ENCODE measurements at regions of chr9 and their contacts with region 1.

Region 1: GRCh38 chr9:129139993-129140396 is 28.8 kb downstream of the PTPA start:
- DNase-seq: peak; percentile 91 to 96
- H3K4me3 ChIP-seq: peak overlapping the region; percentile 36 to 59 (median 53)
- H3K27ac ChIP-seq: peak overlapping the region; percentile 98 to 100
- H3K4me1 ChIP-seq: peaks cover 33 to 44% of the 10 kb centered on the region in 2 donors
- H3K27me3 ChIP-seq: no peaks in the 10 kb centered on the region
- CTCF ChIP-seq: peak in 1 of 3 donors; percentile 14
- POLR2A ChIP-seq: peak; percentile 55

Region 2: DNA sequence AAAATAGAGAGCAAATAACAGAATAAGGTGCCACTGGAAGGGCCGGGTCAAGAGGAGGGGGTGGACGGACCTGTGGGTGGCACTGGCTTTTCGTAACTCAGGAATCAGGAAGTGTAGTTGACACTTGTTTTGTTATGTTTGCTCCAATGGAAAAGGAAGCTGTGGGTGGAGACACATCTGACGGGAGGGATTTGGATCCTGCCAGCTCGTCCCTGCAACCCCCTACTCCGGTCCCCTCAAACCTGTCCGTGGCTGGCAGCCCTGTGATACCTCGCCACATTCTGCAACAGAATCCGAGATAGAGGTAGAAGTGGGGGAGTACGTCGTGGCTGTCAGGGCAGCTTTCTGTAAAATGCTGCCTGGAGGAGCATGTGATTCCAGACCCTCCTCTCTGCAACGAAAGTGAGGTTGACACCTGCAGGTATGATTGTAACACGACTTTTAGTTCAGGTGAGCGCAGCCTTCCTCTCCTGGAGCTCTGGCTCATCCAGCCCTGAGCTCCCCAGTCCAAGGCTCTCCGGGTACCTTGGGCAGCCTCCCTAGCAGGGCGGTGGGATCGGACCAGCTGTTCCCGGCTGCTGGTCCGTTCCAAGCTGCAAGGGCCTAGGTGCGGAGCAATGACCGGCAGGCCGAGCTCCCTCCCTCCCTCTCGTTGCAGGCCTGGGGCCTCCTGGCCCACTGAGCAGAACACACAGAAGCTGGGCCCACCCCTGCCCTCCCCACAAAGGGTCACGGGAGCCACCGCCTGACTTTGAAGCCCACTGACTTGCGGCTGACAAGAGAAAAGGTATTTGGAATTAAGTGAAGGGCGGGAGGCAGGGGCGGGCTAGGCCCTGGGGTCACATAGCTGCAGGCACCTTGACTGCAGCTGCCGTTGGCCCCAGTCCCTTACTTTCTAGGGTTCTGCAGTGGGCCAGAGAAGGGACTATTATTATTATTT is 142.5 kb after region 1 on chr9:
- intact Hi-C with region 1: no loop called
- DNase-seq: peak; percentile 26 to 40
- H3K4me3 ChIP-seq: peak overlapping the region; percentile 41 to 60 (median 44)
- H3K27ac ChIP-seq: peak overlapping the region; percentile 25 to 57
- H3K4me1 ChIP-seq: no peaks in the 10 kb centered on the region
- H3K27me3 ChIP-seq: no peaks in the 10 kb centered on the region
- CTCF ChIP-seq: no peak
- POLR2A ChIP-seq: no peak

Region 3: GRCh38 chr9:129495534-129496325 is 355.7 kb after region 1 on chr9:
- intact Hi-C with region 1: loop called (anchors 1 kb)
- DNase-seq: peak; percentile 92 to 96
- H3K4me3 ChIP-seq: peak overlapping the region; percentile 59 to 77 (median 67)
- H3K27ac ChIP-seq: peak overlapping the region; percentile 100
- H3K4me1 ChIP-seq: peaks cover 17 to 38% of the 10 kb centered on the region in 2 donors
- H3K27me3 ChIP-seq: no peaks in the 10 kb centered on the region
- CTCF ChIP-seq: peak in 1 of 3 donors; percentile 44
- POLR2A ChIP-seq: peak; percentile 11

Region 4: GRCh38 chr9:129610473-129611301 is 470.7 kb after region 1 on chr9:
- intact Hi-C with region 1: loop called (anchors 2 kb)
- DNase-seq: peak; percentile 67 to 85
- H3K4me3 ChIP-seq: peak overlapping the region; percentile 58 to 73 (median 71)
- H3K27ac ChIP-seq: peak overlapping the region; percentile 91 to 94
- H3K4me1 ChIP-seq: peaks cover 12 to 18% of the 10 kb centered on the region in 2 donors
- H3K27me3 ChIP-seq: no peaks in the 10 kb centered on the region
- CTCF ChIP-seq: peak; percentile 79 to 99 (median 92)
- POLR2A ChIP-seq: no peak